IMR-90 (cell line): ENCODE measurements at regions of chr1 and their contacts with region 1.

Region 1: GRCh38 chr1:19163261-19163660 is 46.8 kb downstream of the UBR4 start:
- DNase-seq: peak; percentile 93
- ATAC-seq: peak; percentile 93
- H3K4me3 ChIP-seq: no peak overlapping the region
- H3K27ac ChIP-seq: no peak overlapping the region; the same call in 1 of the 2 replicates
- H3K4me1 ChIP-seq: peaks cover 6% of the 10 kb centered on the region
- H3K27me3 ChIP-seq: no peaks in the 10 kb centered on the region
- CTCF ChIP-seq: no peak
- POLR2A ChIP-seq: no peak
- RAD21 ChIP-seq: no peak

Region 2: GRCh38 chr1:19189270-19189669 is 26.0 kb after region 1 on chr1:
- CTCF ChIA-PET with region 1: no interaction called
- POLR2A ChIA-PET with region 1: no interaction called
- dilution Hi-C with region 1: no loop called
- in situ Hi-C with region 1: no loop called
- intact Hi-C with region 1: no loop called
- DNase-seq: no peak
- ATAC-seq: peak; percentile 72
- H3K4me3 ChIP-seq: no peak overlapping the region
- H3K27ac ChIP-seq: no peak overlapping the region
- H3K4me1 ChIP-seq: peaks cover 3% of the 10 kb centered on the region
- H3K27me3 ChIP-seq: no peaks in the 10 kb centered on the region
- CTCF ChIP-seq: no peak
- POLR2A ChIP-seq: no peak
- RAD21 ChIP-seq: no peak

Region 3: DNA sequence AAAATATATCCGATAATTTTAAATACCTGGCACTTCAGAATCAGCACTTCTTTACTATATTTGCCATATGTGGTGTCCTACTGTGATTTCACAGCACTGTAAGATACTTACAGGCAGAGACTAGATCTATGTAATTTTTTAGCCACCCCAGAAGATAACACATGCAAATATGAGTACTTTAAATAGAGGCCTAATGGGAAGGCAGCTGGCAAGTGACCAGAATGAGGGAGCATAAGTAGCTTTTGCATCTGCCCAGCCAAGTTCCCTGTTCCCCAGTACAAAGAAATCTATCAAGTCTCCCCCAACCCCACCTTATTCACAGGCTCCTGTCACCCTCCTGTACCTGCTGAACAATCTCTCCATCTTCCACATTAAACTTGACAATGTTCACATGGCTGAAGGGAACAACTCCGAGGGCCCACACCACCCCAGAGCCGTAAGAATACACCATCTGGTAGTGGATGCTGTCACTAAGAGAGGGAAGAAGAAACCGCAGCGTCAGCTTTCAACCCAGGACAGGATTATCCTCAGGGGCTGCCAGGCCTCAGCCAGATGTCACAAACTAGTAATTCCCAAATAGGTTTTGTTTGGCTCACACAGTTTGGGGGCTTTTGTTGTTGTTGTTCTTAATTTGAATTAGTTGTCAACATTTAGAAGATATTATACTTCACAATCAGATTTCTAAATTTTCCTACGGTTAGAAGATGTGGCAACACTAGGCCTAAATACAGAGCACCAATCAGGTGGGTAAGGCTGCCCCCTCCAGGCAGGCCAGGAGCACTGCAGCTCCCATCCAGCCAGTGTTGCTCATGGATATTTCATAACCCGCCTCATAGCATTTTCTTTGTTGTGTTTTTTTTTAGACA is 77.6 kb after region 1 on chr1:
- CTCF ChIA-PET with region 1: interaction called, 4 read pairs
- POLR2A ChIA-PET with region 1: no interaction called
- dilution Hi-C with region 1: no loop called
- in situ Hi-C with region 1: no loop called
- intact Hi-C with region 1: loop called (anchors 1 kb)
- DNase-seq: peak; percentile 69
- ATAC-seq: peak; percentile 99
- H3K4me3 ChIP-seq: no peak overlapping the region
- H3K27ac ChIP-seq: no peak overlapping the region
- H3K4me1 ChIP-seq: no peaks in the 10 kb centered on the region
- H3K27me3 ChIP-seq: no peaks in the 10 kb centered on the region
- CTCF ChIP-seq: peak; percentile 95
- POLR2A ChIP-seq: no peak
- RAD21 ChIP-seq: peak; percentile 87